Caco-2 (cell line): ENCODE measurements at regions of chr13 and their contacts with region 1.

Region 1: DNA sequence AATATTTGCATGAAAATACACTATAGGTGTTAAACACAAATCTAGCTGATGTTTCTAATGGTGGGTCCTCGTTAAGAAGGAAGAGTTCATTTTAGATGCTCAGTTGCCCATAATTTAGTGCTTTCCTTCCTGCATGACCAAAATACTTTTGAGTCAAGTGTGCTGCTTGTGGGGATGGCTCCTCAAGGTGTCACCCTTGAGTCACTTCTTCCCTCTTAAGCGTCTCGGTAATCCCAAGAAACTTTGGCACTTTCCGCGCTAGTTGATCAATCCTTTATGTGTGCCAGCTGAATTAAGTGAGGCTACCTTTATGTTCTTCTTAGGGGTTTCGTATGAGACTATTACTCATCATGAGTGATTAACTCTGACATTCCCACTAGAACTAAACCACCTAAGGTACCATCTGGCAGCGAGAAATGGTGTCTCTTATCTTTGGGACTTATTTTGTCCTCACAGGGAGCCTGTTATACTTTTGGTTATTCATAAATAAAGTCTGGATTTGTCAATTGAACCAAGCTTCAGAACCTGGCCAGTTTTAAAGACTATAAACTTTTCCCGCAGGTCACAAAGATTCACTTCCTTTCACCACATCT is 106.8 kb downstream of the NHLRC3 start:
- DNase-seq: peak; percentile 47 to 52
- H3K4me3 ChIP-seq: no peak overlapping the region
- H3K4me3 Mint-ChIP-seq: no peak overlapping the region
- H3K27ac Mint-ChIP-seq: no peak overlapping the region
- H3K4me1 ChIP-seq: no peaks in the 10 kb centered on the region
- H3K4me1 Mint-ChIP-seq: no peaks in the 10 kb centered on the region
- H3K27me3 ChIP-seq: no peaks in the 10 kb centered on the region
- H3K27me3 Mint-ChIP-seq: peaks cover 17% of the 10 kb centered on the region
- CTCF ChIP-seq: peak; percentile 73 to 84

Region 2: GRCh38 chr13:39095500-39095899 is 49.5 kb before region 1 on chr13:
- CTCF ChIA-PET with region 1: no interaction called
- POLR2A ChIA-PET with region 1: no interaction called
- intact Hi-C with region 1: no loop called
- DNase-seq: no peak
- H3K4me3 ChIP-seq: no peak overlapping the region
- H3K4me3 Mint-ChIP-seq: no peak overlapping the region
- H3K27ac Mint-ChIP-seq: no peak overlapping the region
- H3K4me1 ChIP-seq: peaks cover 7% of the 10 kb centered on the region; the same call in 1 of the 2 replicates
- H3K4me1 Mint-ChIP-seq: peaks cover 6% of the 10 kb centered on the region
- H3K27me3 ChIP-seq: no peaks in the 10 kb centered on the region
- H3K27me3 Mint-ChIP-seq: no peaks in the 10 kb centered on the region
- CTCF ChIP-seq: no peak

Region 3: GRCh38 chr13:39263033-39263432 is 118.0 kb after region 1 on chr13:
- CTCF ChIA-PET with region 1: interaction called, 4 read pairs
- POLR2A ChIA-PET with region 1: no interaction called
- intact Hi-C with region 1: loop called (anchors 1 kb)
- DNase-seq: peak; percentile 42 to 64
- H3K4me3 ChIP-seq: no peak overlapping the region
- H3K4me3 Mint-ChIP-seq: no peak overlapping the region
- H3K27ac Mint-ChIP-seq: no peak overlapping the region
- H3K4me1 ChIP-seq: no peaks in the 10 kb centered on the region
- H3K4me1 Mint-ChIP-seq: no peaks in the 10 kb centered on the region
- H3K27me3 ChIP-seq: no peaks in the 10 kb centered on the region
- H3K27me3 Mint-ChIP-seq: peaks cover 7% of the 10 kb centered on the region
- CTCF ChIP-seq: peak; percentile 68 to 73

Region 4: DNA sequence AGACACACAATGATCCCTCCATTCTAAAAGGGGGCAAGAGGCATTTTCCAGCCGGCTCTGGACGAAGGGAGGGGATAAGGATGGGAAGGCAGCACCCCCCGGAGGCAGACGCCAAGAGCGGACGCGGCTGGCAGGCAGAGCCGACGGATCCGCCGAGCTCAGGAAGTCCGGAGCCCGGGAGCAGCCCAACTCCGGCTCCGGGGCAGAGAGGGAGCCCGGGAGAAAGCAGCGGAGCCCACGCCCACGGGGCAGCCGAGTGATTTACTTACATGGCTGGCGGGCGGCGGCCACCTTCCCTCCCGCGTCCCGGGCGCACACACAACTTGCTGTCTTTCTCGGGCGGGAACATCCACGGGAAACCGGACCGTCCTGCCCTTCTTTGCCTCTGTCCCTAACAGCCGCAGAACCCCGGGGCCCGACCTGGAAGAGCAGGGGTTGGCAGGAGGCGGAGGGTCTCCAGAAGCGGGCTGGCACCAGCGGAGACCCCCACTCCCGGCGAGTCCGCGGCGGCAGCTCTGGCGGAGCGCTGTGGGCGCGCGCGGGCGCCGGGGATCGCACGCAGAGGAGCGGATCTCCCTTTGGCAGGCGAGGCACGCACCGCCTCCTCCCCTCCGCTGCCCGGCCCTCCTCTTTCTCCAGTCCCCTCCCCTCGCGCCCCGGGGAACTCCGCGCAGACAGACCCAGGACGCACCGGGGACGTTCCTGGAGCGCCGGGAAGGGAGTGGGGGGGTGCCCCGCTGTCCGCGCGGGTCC is 457.8 kb after region 1 on chr13 and contains the start of gene LHFPL6:
- CTCF ChIA-PET with region 1: no interaction called
- POLR2A ChIA-PET with region 1: no interaction called
- intact Hi-C with region 1: loop called (anchors 5 kb)
- DNase-seq: peak; percentile 72 to 74
- H3K4me3 ChIP-seq: peak within 1 kb of the TSS; percentile 53
- H3K4me3 Mint-ChIP-seq: peak within 1 kb of the TSS; percentile 83
- H3K27ac Mint-ChIP-seq: no peak within 1 kb of the TSS
- H3K4me1 ChIP-seq: 0 out of 2 replicates have a peak, but pooled peaks cover 4% of the 10 kb centered on the region
- H3K4me1 Mint-ChIP-seq: peaks cover 5% of the 10 kb centered on the region
- H3K27me3 ChIP-seq: 0 out of 2 replicates have a peak, but pooled peaks cover 2% of the 10 kb centered on the region
- H3K27me3 Mint-ChIP-seq: peaks cover 23% of the 10 kb centered on the region
- CTCF ChIP-seq: peak in 1 of 2 experiments; percentile 46
- total RNA-seq, gene LHFPL6: 3.6 and 3.9 TPM in 2 replicates

Region 5: DNA sequence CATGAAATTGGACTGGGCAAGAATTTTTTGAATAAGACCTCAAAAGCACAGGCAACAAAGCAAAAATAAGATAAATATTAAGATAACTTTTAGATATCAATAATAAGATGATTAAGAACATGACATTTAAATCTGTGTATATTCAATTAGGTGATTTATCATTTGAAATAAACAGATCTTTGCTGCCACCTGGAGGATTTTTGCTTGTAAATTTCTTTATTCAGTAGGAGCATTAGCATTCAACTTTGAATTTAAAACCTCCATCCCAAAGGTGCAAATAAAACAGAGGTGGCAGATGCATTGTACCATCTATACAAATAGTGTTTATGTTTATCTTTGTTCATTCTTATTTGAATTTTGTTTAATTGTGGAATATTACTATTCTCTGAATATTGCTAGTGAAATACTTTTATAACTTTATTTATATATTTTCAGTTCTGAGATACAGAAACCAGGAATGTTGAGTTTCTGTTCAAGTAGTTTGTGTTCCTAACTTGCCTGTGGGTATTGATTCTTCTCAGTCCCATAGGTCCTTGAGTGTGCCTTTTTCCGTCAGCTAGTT is 531.4 kb after region 1 on chr13:
- CTCF ChIA-PET with region 1: no interaction called
- POLR2A ChIA-PET with region 1: no interaction called
- intact Hi-C with region 1: loop called (anchors 1 kb)
- DNase-seq: peak in 1 of 2 experiments; percentile 29
- H3K4me3 ChIP-seq: no peak overlapping the region
- H3K4me3 Mint-ChIP-seq: no peak overlapping the region
- H3K27ac Mint-ChIP-seq: no peak overlapping the region
- H3K4me1 ChIP-seq: peaks cover 14% of the 10 kb centered on the region; the same call in 1 of the 2 replicates
- H3K4me1 Mint-ChIP-seq: peaks cover 8% of the 10 kb centered on the region
- H3K27me3 ChIP-seq: no peaks in the 10 kb centered on the region
- H3K27me3 Mint-ChIP-seq: no peaks in the 10 kb centered on the region
- CTCF ChIP-seq: peak; percentile 38 to 44